ENCODE measurements at regions of chr6 and their contacts with region 1.

Region 1: GRCh38 chr6:30212865-30213666 is at the start of gene TRIM26:
- DNase-seq: peak; percentile 91 to 98
- H3K4me3 ChIP-seq: peak within 1 kb of the TSS; percentile 72 to 97
- H3K27ac ChIP-seq: peak within 1 kb of the TSS; percentile 93 to 97
- H3K4me1 ChIP-seq: peaks cover 7 to 20% of the 10 kb centered on the region in 2 donors
- H3K27me3 ChIP-seq: no peaks in the 10 kb centered on the region
- CTCF ChIP-seq: no peak
- total RNA-seq, gene TRIM26: 38.6 TPM

Region 2: DNA sequence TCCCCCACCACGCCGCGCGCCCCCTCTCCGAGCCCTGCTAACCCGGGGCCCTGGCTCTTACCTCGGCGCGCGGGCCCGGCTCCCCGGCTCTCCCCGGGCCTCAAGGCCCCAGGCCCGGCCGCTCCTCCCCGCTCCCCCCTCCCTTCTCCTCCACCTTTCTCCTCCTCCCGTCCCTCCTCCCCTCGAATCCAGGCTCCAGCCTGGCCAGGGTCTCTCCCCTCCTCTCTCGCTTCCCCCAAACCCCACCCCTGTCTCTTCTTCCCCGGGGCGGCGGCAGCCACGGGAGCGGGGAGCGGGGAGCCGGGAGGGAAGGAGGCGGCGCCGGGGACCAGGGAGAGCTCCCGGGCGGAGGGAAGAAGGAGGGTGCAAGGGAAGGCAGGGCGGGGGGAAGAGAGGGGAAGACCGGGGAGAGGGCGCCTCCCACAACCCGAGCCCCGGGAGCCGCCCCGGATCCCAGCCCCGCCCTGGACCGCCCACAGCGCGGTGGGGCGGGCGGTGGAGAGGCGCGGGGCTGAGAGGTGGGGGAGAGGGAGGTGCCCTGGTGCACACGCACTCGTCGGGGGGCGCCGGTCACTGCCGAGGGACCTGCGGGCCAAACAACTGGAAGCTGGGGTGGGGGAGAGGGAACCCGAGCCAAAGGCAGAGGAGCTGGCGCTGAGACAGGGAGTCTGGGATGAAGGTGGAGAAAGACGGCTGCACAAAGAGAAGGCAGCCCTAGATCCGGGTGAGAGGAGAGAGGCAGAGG is 580.1 kb before region 1 on chr6 and contains the start of gene GABBR1:
- intact Hi-C with region 1: loop called (anchors 10 kb)
- DNase-seq: peak; percentile 42 to 94
- H3K4me3 ChIP-seq: peak within 1 kb of the TSS; percentile 77 to 81
- H3K27ac ChIP-seq: peak within 1 kb of the TSS; percentile 79 to 81
- H3K4me1 ChIP-seq: peaks cover 8 to 17% of the 10 kb centered on the region in 2 donors
- H3K27me3 ChIP-seq: no peaks in the 10 kb centered on the region
- CTCF ChIP-seq: no peak
- total RNA-seq, gene GABBR1: 166 TPM

Region 3: GRCh38 chr6:29942275-29943052 is 270.6 kb before region 1 on chr6 and contains the start of gene HLA-A:
- intact Hi-C with region 1: loop called (anchors 10 kb)
- DNase-seq: peak; percentile 85 to 98
- H3K4me3 ChIP-seq: peak within 1 kb of the TSS; percentile 67 to 68
- H3K27ac ChIP-seq: peak within 1 kb of the TSS; percentile 85 to 94
- H3K4me1 ChIP-seq: peaks cover 0 to 4% of the 10 kb centered on the region in 2 donors
- H3K27me3 ChIP-seq: no peaks in the 10 kb centered on the region
- CTCF ChIP-seq: no peak
- total RNA-seq, gene HLA-A: 1,099 TPM

Region 4: GRCh38 chr6:30102970-30103874 is 109.8 kb before region 1 on chr6:
- intact Hi-C with region 1: loop called (anchors 2 kb)
- DNase-seq: peak; percentile 32 to 94
- H3K4me3 ChIP-seq: peak overlapping the region; percentile 53 to 58
- H3K27ac ChIP-seq: peak overlapping the region; percentile 60
- H3K4me1 ChIP-seq: peaks cover 7 to 18% of the 10 kb centered on the region in 2 donors
- H3K27me3 ChIP-seq: peaks cover 12% of the 10 kb centered on the region
- CTCF ChIP-seq: peak; percentile 80 to 92 (median 88)

Region 5: GRCh38 chr6:30326526-30327260 is 113.6 kb after region 1 on chr6 and contains the start of gene TRIM39:
- intact Hi-C with region 1: loop called (anchors 1 kb)
- DNase-seq: peak; percentile 47 to 93
- H3K4me3 ChIP-seq: peak within 1 kb of the TSS; percentile 76 to 95
- H3K27ac ChIP-seq: peak within 1 kb of the TSS; percentile 97 to 99
- H3K4me1 ChIP-seq: peaks cover 0 to 20% of the 10 kb centered on the region in 2 donors
- H3K27me3 ChIP-seq: no peaks in the 10 kb centered on the region
- CTCF ChIP-seq: no peak
- total RNA-seq, gene TRIM39: 2.8 TPM